ENCODE measurements at regions of chr1 and their contacts with region 1.

Region 1: DNA sequence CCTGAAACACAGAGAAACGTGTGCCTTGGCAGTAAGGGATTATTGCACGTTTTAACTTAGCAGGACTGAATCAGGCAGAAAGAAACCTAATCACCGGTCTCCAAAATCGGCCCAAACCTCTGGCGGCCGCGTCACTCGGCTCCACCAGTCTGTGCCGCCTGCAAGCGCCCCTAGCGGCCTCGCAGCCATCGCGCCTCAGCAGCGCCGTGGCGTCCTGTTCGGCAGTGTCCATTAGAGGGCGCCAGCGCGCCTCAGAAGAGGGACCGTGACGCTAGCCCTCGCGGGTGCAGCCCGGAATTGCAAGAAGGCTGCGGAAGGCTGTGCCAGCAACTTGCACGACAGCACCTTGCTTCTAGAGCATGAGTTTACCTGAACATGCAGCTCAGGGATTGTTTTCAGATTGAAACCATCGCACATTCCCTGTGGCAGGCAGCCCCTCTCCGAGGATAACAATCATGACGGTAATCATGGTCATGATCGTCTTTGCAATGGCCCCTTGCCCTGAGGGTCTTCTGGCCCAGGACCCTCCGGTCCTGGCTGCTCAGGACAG is 164.4 kb downstream of the TRIM33 start:
- DNase-seq: peak; percentile 80
- ATAC-seq: peak; percentile 98
- H3K4me3 ChIP-seq: peak overlapping the region; percentile 50 to 77 (median 67)
- H3K27ac ChIP-seq: no peak overlapping the region
- H3K4me1 ChIP-seq: peaks cover 31% of the 10 kb centered on the region
- H3K27me3 ChIP-seq: peaks cover 6 to 48% of the 10 kb centered on the region in 2 experiments; a peak in 4 of 5 replicates
- CTCF ChIP-seq: peak; percentile 100
- EP300 ChIP-seq: peak; percentile 35 to 63; a peak in 2 of 4 replicates
- POLR2A ChIP-seq: no peak
- RAD21 ChIP-seq: peak; percentile 99

Region 2: GRCh38 chr1:113978863-113979702 is 367.5 kb before region 1 on chr1 and contains the start of gene OLFML3:
- CTCF ChIA-PET with region 1: interaction called, 11 read pairs
- POLR2A ChIA-PET with region 1: no interaction called
- in situ Hi-C with region 1: no loop called
- intact Hi-C with region 1: no loop called
- DNase-seq: peak; percentile 87
- ATAC-seq: peak; percentile 82
- H3K4me3 ChIP-seq: peak within 1 kb of the TSS; percentile 56 to 72 (median 63)
- H3K27ac ChIP-seq: peak within 1 kb of the TSS; percentile 59
- H3K4me1 ChIP-seq: peaks cover 44% of the 10 kb centered on the region
- H3K27me3 ChIP-seq: no peaks in the 10 kb centered on the region; a peak in 1 of 5 replicates
- CTCF ChIP-seq: peak; percentile 80
- EP300 ChIP-seq: no peak
- POLR2A ChIP-seq: 0 out of 4 replicates have a peak, but pooled peaks of 1 of the 2 experiments have one; percentile 24
- RAD21 ChIP-seq: peak; percentile 50
- total RNA-seq, gene OLFML3: 2.1 and 5.1 TPM in 2 replicates

Region 3: DNA sequence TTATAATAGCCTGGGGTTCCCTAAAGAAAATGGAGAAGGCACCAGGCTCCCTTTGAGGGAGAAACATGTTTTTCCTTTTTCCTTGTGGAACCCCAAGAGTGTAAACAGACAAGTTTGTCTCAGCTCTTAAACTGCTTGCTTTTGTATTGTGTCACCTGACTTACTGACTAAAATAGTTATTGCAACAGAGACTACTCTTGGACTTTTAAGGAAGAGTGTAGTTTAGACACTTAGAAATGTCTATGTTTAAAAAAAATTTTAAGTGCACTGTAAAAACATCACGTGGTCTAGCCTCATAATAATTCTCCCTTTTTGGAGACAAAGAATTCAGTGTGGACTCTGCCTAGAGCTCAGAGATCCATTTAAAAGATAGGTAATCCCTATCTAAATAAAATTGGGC is 23.4 kb after region 1 on chr1:
- CTCF ChIA-PET with region 1: interaction called, 3 read pairs
- POLR2A ChIA-PET with region 1: no interaction called
- in situ Hi-C with region 1: no loop called
- intact Hi-C with region 1: loop called (anchors 1 kb)
- DNase-seq: no peak
- ATAC-seq: no peak
- H3K4me3 ChIP-seq: no peak overlapping the region
- H3K27ac ChIP-seq: no peak overlapping the region
- H3K4me1 ChIP-seq: peaks cover 15% of the 10 kb centered on the region
- H3K27me3 ChIP-seq: no peaks in the 10 kb centered on the region
- CTCF ChIP-seq: no peak
- EP300 ChIP-seq: no peak
- POLR2A ChIP-seq: no peak
- RAD21 ChIP-seq: no peak

Region 4: DNA sequence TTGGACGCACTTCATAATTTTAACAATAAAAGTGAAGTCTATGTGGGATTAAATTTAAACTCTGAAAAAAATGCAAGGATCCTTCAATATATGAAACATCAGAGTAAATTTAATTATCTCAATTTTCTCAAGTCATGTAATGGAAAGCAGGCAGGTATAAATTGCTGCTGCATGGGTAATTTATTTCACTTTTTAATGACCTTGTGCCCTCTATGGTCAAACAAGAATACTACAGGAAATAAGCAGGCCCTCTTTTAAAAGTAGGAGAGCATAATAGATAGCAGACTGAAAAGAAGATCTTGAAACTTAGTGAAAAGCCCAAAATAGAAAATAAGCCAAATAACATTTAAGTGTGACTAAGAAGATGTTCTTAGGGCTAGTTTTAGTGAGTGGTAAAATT is 212.0 kb after region 1 on chr1:
- CTCF ChIA-PET with region 1: interaction called, 15 read pairs
- POLR2A ChIA-PET with region 1: no interaction called
- in situ Hi-C with region 1: loop called (anchors 5 kb)
- intact Hi-C with region 1: loop called (anchors 2 kb)
- DNase-seq: peak; percentile 18
- ATAC-seq: peak; percentile 58; the same call in 1 of the 3 replicates
- H3K4me3 ChIP-seq: no peak overlapping the region
- H3K27ac ChIP-seq: no peak overlapping the region
- H3K4me1 ChIP-seq: peaks cover 6% of the 10 kb centered on the region; the same call in 1 of the 2 replicates
- H3K27me3 ChIP-seq: no peaks in the 10 kb centered on the region
- CTCF ChIP-seq: peak; percentile 48; the same call in 1 of the 2 replicates
- EP300 ChIP-seq: no peak
- POLR2A ChIP-seq: no peak
- RAD21 ChIP-seq: no peak

Region 5: DNA sequence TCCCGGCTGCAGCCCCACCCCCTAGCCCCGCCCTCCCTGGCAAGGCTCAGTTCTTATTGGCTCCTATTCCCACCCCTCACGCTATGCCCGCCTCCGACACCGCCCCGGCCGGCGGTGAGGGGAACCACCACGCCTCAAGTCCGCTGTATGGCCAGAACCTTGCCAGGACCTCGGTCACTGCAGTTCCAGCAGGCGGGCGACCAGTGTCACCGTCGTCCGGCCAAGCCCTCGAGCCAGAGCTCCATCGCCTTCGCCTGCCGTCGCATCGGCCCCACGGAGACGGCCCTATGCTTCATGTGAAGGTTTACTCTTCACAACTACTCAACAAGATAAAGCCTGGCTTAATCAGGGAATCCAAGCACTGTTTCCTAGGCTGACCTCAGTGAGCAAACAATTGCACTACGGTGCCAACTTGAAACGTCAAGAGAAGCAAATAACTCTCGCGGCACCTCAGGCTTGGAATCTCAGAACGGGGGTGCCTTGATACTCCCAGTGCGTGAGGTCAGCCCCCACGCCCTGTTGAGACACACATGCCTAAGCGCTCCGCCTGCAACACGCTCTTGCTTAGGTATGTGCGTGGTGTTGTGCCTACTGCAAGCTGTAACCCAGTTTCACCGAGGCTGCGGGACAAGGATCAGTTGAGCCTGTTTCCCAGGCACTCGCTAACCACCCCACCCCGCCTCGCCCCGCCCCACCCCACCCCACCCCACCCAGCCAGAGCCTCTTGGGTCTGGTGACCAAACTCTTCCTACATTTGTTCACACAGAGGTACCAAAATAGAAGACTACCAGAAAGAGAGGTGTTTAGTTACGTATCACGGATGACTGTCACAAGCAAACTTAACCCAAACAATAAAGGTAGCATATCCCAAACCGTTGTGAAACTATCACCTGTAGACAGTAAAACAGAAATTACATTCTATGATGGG is 323.8 kb after region 1 on chr1:
- CTCF ChIA-PET with region 1: interaction called, 12 read pairs
- POLR2A ChIA-PET with region 1: no interaction called
- in situ Hi-C with region 1: loop called (anchors 25 kb)
- intact Hi-C with region 1: loop called (anchors 2 kb)
- DNase-seq: peak; percentile 81
- ATAC-seq: peak; percentile 99
- H3K4me3 ChIP-seq: peak overlapping the region; percentile 53 to 80 (median 65)
- H3K27ac ChIP-seq: no peak overlapping the region
- H3K4me1 ChIP-seq: peaks cover 17% of the 10 kb centered on the region
- H3K27me3 ChIP-seq: peaks cover 0 to 24% of the 10 kb centered on the region in 2 experiments; a peak in 1 of 5 replicates
- CTCF ChIP-seq: peak; percentile 23; the same call in 1 of the 2 replicates
- EP300 ChIP-seq: no peak
- POLR2A ChIP-seq: peak in 1 of 2 experiments; percentile 34; a peak in 1 of 4 replicates
- RAD21 ChIP-seq: no peak